ENCODE measurements at regions of chr1 and their contacts with region 1.

Region 1: GRCh38 chr1:36187800-36188593 is 32.0 kb downstream of the MAP7D1 start:
- DNase-seq: peak; percentile 62 to 91 (median 78)
- ATAC-seq: peak; percentile 96 to 98 (median 96)
- H3K4me3 ChIP-seq: no peak overlapping the region
- H3K4me3 Mint-ChIP-seq: no peak overlapping the region
- H3K27ac ChIP-seq: peak overlapping the region; percentile 52
- H3K27ac Mint-ChIP-seq: peak overlapping the region; percentile 85 to 89
- H3K4me1 ChIP-seq: peaks cover 0 to 9% of the 10 kb centered on the region in 2 experiments
- H3K4me1 Mint-ChIP-seq: peaks cover 6 to 9% (median 7%) of the 10 kb centered on the region in 3 donors
- H3K27me3 ChIP-seq: no peaks in the 10 kb centered on the region
- H3K27me3 Mint-ChIP-seq: no peaks in the 10 kb centered on the region

Region 2: GRCh38 chr1:36285448-36286101 is 97.6 kb after region 1 on chr1:
- CTCF ChIA-PET with region 1: interaction called, 14 to 21 read pairs
- POLR2A ChIA-PET with region 1: interaction called in 1 of 2 experiments, 5 read pairs
- DNase-seq: peak in 33 of 35 experiments; percentile 16 to 93 (median 62)
- ATAC-seq: peak; percentile 83 to 94 (median 90)
- H3K4me3 ChIP-seq: no peak overlapping the region
- H3K4me3 Mint-ChIP-seq: no peak overlapping the region
- H3K27ac ChIP-seq: peak overlapping the region; percentile 2
- H3K27ac Mint-ChIP-seq: peak overlapping the region; percentile 58 to 69
- H3K4me1 ChIP-seq: no peaks in the 10 kb centered on the region
- H3K4me1 Mint-ChIP-seq: peaks cover 15 to 22% (median 16%) of the 10 kb centered on the region in 3 donors
- H3K27me3 ChIP-seq: no peaks in the 10 kb centered on the region
- H3K27me3 Mint-ChIP-seq: no peaks in the 10 kb centered on the region